PC-9 (cell line): ENCODE measurements at regions of chr2 and their contacts with region 1.

Region 1: DNA sequence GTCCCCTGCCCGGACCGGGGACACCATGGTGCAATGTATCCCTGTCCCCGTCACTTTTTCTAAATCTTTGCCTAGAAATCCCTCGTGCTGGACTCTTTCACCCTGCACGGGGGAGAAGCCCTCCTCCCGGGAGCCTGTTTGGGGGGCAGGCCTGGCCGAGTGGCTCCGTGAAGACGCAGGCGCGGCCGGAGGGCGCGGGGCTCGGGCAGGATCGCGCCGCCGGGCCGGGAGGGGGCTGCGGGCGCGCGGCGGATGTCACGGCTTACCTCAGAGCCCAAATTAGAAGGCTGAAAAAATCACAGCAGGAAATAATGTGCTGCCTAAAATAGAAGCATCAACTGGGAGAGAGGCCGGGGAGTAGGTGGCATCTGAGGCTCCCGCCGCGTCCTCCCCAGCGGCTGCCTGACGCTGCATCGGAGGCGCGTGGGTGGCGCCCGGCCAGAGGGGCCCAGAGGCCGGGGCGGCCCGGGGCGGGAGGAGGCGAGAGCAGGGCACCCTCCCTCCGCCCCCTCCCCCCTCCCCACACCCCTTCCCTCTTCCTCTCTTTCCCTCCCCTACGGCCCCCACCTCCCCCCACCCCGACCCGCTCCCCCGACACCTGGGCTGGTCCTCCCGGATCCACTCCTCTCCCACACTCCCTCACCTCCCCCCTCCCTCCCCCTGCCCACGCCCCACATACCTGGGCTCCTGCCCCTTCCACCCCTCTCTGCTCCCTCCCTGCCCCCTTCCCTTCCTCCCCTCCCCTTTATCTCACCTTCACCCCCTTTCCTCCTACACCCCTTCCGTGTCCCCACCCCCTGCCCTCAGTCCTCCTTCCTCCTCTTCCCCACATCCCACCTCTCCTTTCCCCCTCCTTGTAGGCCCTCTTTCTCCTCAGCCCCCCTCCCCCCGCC is 51.9 kb downstream of the SLC4A1AP start:
- DNase-seq: peak; percentile 71 to 78
- H3K4me3 ChIP-seq: peak overlapping the region; percentile 80
- H3K27ac ChIP-seq: peak overlapping the region; percentile 94
- H3K4me1 ChIP-seq: peaks cover 89% of the 10 kb centered on the region
- H3K27me3 ChIP-seq: no peaks in the 10 kb centered on the region
- CTCF ChIP-seq: no peak

Region 2: DNA sequence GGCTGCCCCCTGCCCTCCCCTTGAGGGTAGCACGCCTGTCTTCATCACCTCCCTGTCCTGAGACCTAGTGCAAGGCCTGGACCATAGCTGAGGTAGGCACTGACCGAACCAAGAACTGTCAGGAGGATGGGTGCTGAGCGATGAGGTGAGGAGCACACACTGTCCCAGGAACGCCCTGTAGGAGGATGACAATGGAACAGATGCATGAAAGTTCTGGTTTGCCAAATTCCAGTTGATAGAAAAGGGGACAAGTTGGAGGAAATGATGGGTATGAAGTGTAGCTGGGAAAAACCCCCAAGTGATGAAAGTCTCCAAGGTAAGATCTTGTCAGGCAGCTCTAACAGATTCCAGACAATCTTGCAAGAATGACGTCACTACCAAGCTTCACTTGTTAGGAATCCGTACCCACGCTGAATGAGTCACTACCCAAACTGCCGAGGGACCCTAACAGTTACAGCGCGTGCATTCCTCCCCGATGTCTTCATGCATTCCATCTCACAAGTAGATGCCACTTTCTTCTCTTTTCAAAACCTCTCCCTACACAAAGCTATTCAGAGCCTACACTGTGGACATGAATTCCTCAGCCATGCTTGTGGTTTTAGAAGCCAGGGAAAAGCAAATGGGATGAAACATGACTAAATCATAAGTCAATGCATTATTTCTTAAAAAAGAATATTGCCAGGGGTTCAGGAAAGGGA is 83.5 kb after region 1 on chr2:
- CTCF ChIA-PET with region 1: interaction called, 3 read pairs
- POLR2A ChIA-PET with region 1: no interaction called
- intact Hi-C with region 1: loop called (anchors 2 kb)
- DNase-seq: peak; percentile 89 to 100
- H3K4me3 ChIP-seq: peak overlapping the region; percentile 3; the same call in 1 of the 2 replicates
- H3K27ac ChIP-seq: peak overlapping the region; percentile 94
- H3K4me1 ChIP-seq: peaks cover 40% of the 10 kb centered on the region
- H3K27me3 ChIP-seq: no peaks in the 10 kb centered on the region
- CTCF ChIP-seq: no peak

Region 3: DNA sequence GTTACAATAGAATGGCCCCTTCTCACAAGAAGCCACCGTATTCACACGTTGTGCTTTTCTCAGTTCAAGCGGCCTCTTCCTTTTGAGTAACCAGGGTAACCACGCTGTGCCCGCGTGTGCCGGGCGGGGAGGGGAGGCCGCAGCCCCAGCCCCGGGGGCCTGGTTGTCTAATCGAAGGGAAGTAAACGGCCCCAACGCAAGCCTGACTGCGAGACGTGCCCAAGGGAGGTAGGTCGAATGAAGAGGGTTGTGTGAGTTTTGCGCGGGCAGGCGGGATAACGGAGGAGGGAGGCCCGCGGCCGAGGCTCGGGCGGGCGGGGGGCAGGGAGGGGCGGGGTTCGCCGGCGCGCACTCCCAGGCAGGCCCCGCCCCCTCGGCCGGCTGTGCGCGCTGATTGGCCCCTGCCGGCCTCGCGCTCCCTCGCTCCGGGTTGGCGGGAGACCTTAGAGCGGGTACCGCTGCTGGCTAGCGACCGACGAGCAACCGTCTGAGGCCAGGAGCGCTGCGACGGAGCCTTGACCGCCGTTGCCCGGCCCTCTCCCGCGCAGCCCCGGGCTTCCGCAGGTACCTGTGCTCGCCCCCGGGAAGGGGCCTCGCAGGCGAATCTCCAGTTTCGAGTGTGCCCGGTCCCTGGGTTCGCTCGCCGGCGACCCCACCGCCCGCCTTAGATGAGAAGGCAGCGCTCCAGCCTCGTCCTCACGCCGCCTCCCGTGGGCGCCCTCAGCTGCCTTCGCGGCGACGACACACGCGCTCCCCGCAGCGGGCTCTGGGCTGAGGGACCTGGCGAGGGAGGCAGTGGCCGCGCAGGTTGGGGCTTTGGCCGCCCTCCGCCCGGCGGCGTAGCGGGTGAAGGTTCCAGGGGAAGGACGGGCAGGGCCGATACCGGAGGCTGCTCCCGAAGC is 1095.1 kb after region 1 on chr2 and contains the start of gene SPDYA:
- CTCF ChIA-PET with region 1: no interaction called
- POLR2A ChIA-PET with region 1: interaction called, 16 read pairs
- intact Hi-C with region 1: no loop called
- DNase-seq: no peak
- H3K4me3 ChIP-seq: no peak within 1 kb of the TSS
- H3K27ac ChIP-seq: no peak within 1 kb of the TSS
- H3K4me1 ChIP-seq: no peaks in the 10 kb centered on the region
- H3K27me3 ChIP-seq: no peaks in the 10 kb centered on the region
- CTCF ChIP-seq: no peak
- total RNA-seq, gene SPDYA: 1.9 and 3.0 TPM in 2 replicates